A549 (cell line): ENCODE measurements at regions of chr19 and their contacts with region 1.

Region 1: GRCh38 chr19:47729992-47730889 is 15.1 kb upstream of the NOP53 start:
- DNase-seq: peak; percentile 87 to 93
- ATAC-seq: peak; percentile 79 to 84
- H3K4me3 ChIP-seq: peak overlapping the region; percentile 48
- H3K27ac ChIP-seq: peak overlapping the region; percentile 83 to 94
- H3K4me1 ChIP-seq: peaks cover 48% of the 10 kb centered on the region
- CTCF ChIP-seq: no peak
- EP300 ChIP-seq: no peak
- POLR2A ChIP-seq: 0 out of 2 replicates have a peak, but pooled peaks have one; percentile 15
- RAD21 ChIP-seq: no peak; a peak in 1 of 5 replicates

Region 2: DNA sequence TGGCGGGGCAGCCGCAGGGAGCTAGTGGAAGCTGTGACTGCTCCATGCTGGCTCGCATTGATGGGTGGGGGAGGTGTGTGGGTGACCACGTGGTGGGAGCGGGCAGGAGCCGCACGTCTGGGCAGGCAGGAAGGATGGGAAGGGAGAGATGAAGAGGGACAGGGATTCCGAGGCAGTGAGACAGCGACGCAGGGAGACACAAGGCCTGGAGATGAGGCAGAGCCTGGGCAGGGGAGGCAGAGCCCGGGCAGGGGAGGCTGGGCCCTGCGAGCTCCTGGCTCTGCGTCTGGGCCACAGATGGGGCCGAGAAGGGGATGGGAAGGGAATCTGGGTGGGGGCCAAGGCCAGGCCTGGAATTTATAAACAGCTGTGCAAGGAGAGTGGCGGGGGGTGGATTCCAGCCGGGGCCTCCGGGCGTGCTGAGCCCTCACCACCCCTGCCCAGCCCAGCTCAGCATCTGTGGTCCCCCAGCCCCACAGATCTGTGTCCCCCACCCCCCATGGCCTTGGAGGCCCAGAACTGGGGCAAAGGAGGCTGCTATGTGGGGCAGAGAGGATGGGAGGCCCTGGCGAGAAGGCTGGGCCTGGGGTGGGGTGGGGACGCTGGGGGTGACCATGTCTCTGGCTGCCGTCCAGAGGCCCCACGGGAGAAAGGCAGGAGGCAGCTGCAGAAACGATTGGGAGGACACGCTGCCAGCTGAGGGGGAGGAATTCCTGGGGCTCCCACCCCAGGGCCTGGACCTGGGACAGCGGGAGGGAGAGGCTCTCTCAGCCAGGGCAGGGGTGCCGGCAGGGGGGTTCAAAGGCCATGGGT is 11.0 kb before region 1 on chr19:
- CTCF ChIA-PET with region 1: interaction called, 1,389 read pairs
- POLR2A ChIA-PET with region 1: interaction called, 6 read pairs
- DNase-seq: peak; percentile 79 to 91
- ATAC-seq: peak; percentile 85 to 86
- H3K4me3 ChIP-seq: peak overlapping the region; percentile 17; the same call in 2 of the 3 replicates
- H3K27ac ChIP-seq: peak overlapping the region; percentile 96 to 99
- H3K4me1 ChIP-seq: peaks cover 58% of the 10 kb centered on the region
- CTCF ChIP-seq: no peak
- EP300 ChIP-seq: 0 out of 5 replicates have a peak, but pooled peaks of 1 of the 2 experiments have one; percentile 20
- POLR2A ChIP-seq: no peak
- RAD21 ChIP-seq: no peak

Region 3: GRCh38 chr19:47765523-47766358 is 35.5 kb after region 1 on chr19:
- CTCF ChIA-PET with region 1: no interaction called
- POLR2A ChIA-PET with region 1: no interaction called
- DNase-seq: peak; percentile 58 to 74
- ATAC-seq: peak; percentile 66 to 85
- H3K4me3 ChIP-seq: no peak overlapping the region
- H3K27ac ChIP-seq: no peak overlapping the region
- H3K4me1 ChIP-seq: no peaks in the 10 kb centered on the region
- CTCF ChIP-seq: peak; percentile 83
- EP300 ChIP-seq: no peak
- POLR2A ChIP-seq: no peak
- RAD21 ChIP-seq: peak; percentile 61 to 84